GM12878 (cell line): ENCODE measurements at regions of chr6 and their contacts with region 1.

Region 1: DNA sequence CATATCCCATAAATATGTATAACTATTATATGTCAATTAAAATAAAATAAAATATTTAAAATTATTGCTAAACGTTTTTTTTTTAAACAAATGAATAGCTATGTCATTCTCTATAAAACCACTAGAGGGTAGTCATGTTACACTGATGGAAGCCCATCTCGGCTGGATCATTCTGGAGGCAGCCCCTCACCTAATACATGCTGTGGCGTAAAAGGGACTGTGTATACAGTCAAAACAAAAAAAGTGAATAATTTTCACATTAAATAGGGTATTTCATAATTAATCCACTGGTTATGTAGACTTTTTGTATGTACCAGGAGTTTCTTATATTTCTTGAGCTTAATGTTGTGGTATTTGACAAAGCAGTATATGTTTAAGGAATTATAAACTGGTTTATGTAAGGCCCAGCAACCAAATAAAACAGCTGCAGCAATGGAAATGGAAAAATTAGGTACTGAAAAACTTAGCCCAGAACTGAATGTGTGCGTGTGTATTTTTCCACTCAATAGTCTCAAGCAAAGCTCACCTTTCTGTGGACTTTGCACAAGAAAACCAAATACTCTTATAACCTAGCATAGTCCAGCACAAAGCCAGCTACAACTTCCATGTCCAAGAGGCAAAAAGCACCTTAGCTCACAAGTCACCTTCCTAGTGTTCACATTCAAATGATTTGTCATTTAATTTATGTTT is 81.7 kb downstream of the COL9A1 start:
- DNase-seq: no peak
- ATAC-seq: peak; percentile 76
- H3K4me3 ChIP-seq: no peak overlapping the region
- H3K27ac ChIP-seq: no peak overlapping the region
- H3K4me1 ChIP-seq: no peaks in the 10 kb centered on the region
- H3K27me3 ChIP-seq: no peaks in the 10 kb centered on the region; a peak in 1 of 4 replicates
- CTCF ChIP-seq: peak; percentile 59 to 66 (median 61)
- EP300 ChIP-seq: no peak
- POLR2A ChIP-seq: no peak
- RAD21 ChIP-seq: peak; percentile 82

Region 2: DNA sequence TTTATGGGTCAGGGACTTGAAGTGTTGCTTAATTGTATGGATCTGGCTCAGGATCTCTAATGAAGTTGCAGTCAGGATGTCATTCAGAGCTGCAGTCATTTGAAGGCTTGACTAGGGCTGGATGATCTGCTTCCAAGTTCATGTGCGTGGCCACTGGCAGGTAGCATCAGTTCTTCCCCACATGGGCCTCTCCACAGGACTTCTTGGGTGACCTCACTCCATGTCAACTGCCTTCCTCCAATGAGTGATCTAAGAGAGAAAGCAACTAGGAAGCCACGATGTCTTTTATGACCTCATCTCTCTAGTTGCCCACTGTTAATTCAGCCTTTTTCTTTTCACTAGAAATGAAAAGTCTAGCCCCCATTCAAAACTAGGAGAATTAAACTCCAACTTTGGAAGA is 22.4 kb before region 1 on chr6:
- CTCF ChIA-PET with region 1: interaction called, 19 read pairs
- POLR2A ChIA-PET with region 1: no interaction called
- RAD21 ChIA-PET with region 1: interaction called, 6 read pairs
- SMC1A ChIA-PET with region 1: interaction called, 6 read pairs
- in situ Hi-C with region 1: no loop called
- intact Hi-C with region 1: no loop called
- DNase-seq: no peak
- ATAC-seq: no peak
- H3K4me3 ChIP-seq: no peak overlapping the region
- H3K27ac ChIP-seq: no peak overlapping the region
- H3K4me1 ChIP-seq: no peaks in the 10 kb centered on the region
- H3K27me3 ChIP-seq: no peaks in the 10 kb centered on the region
- CTCF ChIP-seq: no peak
- EP300 ChIP-seq: no peak
- POLR2A ChIP-seq: no peak
- RAD21 ChIP-seq: no peak

Region 3: GRCh38 chr6:70231311-70231710 is 10.1 kb after region 1 on chr6:
- CTCF ChIA-PET with region 1: interaction called, 74 read pairs
- POLR2A ChIA-PET with region 1: no interaction called
- RAD21 ChIA-PET with region 1: interaction called, 26 read pairs
- SMC1A ChIA-PET with region 1: interaction called, 24 read pairs
- in situ Hi-C with region 1: no loop called
- intact Hi-C with region 1: no loop called
- DNase-seq: no peak
- ATAC-seq: no peak
- H3K4me3 ChIP-seq: no peak overlapping the region
- H3K27ac ChIP-seq: no peak overlapping the region
- H3K4me1 ChIP-seq: no peaks in the 10 kb centered on the region
- H3K27me3 ChIP-seq: no peaks in the 10 kb centered on the region; a peak in 1 of 4 replicates
- CTCF ChIP-seq: no peak
- EP300 ChIP-seq: no peak
- POLR2A ChIP-seq: no peak
- RAD21 ChIP-seq: no peak

Region 4: DNA sequence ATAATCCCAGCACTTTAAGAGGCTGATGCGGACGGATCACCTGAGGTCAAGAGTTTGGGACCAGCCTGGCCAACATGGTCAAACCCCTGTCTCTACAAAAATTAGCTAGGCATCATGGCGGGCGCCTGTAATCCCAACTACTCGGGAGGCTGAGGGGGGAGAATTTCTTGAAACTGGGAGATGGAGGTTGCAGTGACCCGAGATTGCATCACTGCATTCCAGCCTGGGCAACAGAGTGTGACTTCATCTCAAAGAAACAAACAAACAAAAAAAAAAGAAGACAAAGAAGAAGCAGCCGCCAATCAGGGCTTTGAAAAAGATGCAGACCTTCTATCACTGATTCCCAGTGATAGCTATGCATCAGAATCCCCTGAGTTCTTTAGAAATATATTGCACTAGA is 24.9 kb after region 1 on chr6:
- CTCF ChIA-PET with region 1: interaction called, 12 read pairs
- POLR2A ChIA-PET with region 1: no interaction called
- RAD21 ChIA-PET with region 1: interaction called, 7 read pairs
- SMC1A ChIA-PET with region 1: no interaction called
- in situ Hi-C with region 1: no loop called
- intact Hi-C with region 1: no loop called
- DNase-seq: no peak
- ATAC-seq: no peak
- H3K4me3 ChIP-seq: no peak overlapping the region
- H3K27ac ChIP-seq: no peak overlapping the region
- H3K4me1 ChIP-seq: no peaks in the 10 kb centered on the region
- H3K27me3 ChIP-seq: peaks cover 2 to 4% of the 10 kb centered on the region in 2 experiments; a peak in 2 of 4 replicates
- CTCF ChIP-seq: no peak
- EP300 ChIP-seq: no peak
- POLR2A ChIP-seq: no peak
- RAD21 ChIP-seq: no peak

Region 5: DNA sequence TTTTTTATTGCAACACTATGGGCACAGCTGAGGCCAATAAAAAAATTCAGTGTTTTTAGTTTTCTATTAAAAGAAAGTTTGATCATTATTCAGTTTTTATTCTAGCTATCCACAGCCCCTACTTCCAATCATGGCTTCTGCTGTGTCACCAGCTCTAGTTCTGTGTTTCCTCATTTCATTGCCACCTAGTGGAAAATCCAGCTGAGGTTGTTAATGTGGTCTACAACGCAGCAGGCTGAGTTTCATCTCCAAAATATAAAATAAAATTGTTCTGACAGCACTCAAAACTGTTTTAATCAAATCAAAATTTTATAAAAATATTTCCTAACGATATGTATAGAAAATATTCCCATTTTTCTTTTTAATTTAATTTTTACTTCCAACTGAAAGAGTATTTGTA is 68.1 kb after region 1 on chr6:
- CTCF ChIA-PET with region 1: interaction called, 18 read pairs
- POLR2A ChIA-PET with region 1: no interaction called
- RAD21 ChIA-PET with region 1: no interaction called
- SMC1A ChIA-PET with region 1: interaction called, 5 read pairs
- in situ Hi-C with region 1: no loop called
- intact Hi-C with region 1: loop called (anchors 5 kb)
- DNase-seq: no peak
- ATAC-seq: no peak
- H3K4me3 ChIP-seq: no peak overlapping the region
- H3K27ac ChIP-seq: no peak overlapping the region
- H3K4me1 ChIP-seq: no peaks in the 10 kb centered on the region
- H3K27me3 ChIP-seq: peaks cover 0 to 2% of the 10 kb centered on the region in 2 experiments; a peak in 2 of 4 replicates
- CTCF ChIP-seq: no peak
- EP300 ChIP-seq: no peak
- POLR2A ChIP-seq: no peak
- RAD21 ChIP-seq: no peak

Region 6: DNA sequence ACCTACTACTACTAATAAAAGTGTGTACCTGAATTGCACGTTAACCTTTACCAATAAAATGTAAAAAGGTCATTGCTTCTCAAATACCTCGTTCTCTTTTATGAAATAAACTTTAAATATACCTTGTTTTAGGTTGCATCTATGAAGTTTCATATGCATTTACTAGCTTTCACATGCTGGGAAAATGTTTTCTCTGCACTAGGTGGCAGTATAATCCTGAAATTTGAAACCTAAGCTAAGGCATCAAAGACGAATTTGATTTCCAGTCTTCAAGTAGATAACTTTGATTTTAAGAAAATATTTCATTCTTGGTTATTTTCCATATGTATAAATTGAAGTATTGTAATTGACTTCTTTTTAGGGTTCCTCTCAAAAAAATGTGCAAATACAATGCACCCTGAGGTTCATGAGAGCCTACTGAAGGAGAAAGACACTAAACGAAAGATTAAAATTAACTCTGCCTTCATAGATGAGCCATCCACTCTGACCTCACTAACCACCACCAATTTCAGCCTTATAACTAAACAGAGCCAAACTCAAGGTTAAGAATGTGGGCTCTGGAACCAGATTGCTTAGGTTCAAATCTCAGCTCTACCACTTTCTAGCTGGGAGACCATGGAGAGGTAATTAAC is 89.0 kb after region 1 on chr6:
- CTCF ChIA-PET with region 1: interaction called, 53 read pairs
- POLR2A ChIA-PET with region 1: no interaction called
- RAD21 ChIA-PET with region 1: interaction called, 9 read pairs
- SMC1A ChIA-PET with region 1: interaction called, 12 read pairs
- in situ Hi-C with region 1: no loop called
- intact Hi-C with region 1: loop called (anchors 5 kb)
- DNase-seq: no peak
- ATAC-seq: peak; percentile 56; the same call in 2 of the 3 replicates
- H3K4me3 ChIP-seq: no peak overlapping the region
- H3K27ac ChIP-seq: no peak overlapping the region
- H3K4me1 ChIP-seq: 0 out of 2 replicates have a peak, but pooled peaks cover 3% of the 10 kb centered on the region
- H3K27me3 ChIP-seq: no peaks in the 10 kb centered on the region
- CTCF ChIP-seq: peak; percentile 39 to 69 (median 48); a peak in 5 of 6 replicates
- EP300 ChIP-seq: no peak
- POLR2A ChIP-seq: no peak
- RAD21 ChIP-seq: peak; percentile 76

Region 7: GRCh38 chr6:70884074-70884983 is 663.2 kb after region 1 on chr6:
- CTCF ChIA-PET with region 1: interaction called, 10 read pairs
- POLR2A ChIA-PET with region 1: no interaction called
- RAD21 ChIA-PET with region 1: interaction called, 4 read pairs
- SMC1A ChIA-PET with region 1: interaction called, 3 read pairs
- in situ Hi-C with region 1: no loop called
- intact Hi-C with region 1: loop called (anchors 5 kb)
- DNase-seq: peak; percentile 19
- ATAC-seq: peak; percentile 94
- H3K4me3 ChIP-seq: no peak overlapping the region
- H3K27ac ChIP-seq: no peak overlapping the region
- H3K4me1 ChIP-seq: no peaks in the 10 kb centered on the region
- H3K27me3 ChIP-seq: no peaks in the 10 kb centered on the region
- CTCF ChIP-seq: peak; percentile 75 to 89 (median 87); a peak in 4 of 6 replicates
- EP300 ChIP-seq: no peak
- POLR2A ChIP-seq: no peak
- RAD21 ChIP-seq: peak; percentile 97